Heart left ventricle (tissue), 16 donors: ENCODE measurements at regions of chr17 and their contacts with region 1.

Region 1: DNA sequence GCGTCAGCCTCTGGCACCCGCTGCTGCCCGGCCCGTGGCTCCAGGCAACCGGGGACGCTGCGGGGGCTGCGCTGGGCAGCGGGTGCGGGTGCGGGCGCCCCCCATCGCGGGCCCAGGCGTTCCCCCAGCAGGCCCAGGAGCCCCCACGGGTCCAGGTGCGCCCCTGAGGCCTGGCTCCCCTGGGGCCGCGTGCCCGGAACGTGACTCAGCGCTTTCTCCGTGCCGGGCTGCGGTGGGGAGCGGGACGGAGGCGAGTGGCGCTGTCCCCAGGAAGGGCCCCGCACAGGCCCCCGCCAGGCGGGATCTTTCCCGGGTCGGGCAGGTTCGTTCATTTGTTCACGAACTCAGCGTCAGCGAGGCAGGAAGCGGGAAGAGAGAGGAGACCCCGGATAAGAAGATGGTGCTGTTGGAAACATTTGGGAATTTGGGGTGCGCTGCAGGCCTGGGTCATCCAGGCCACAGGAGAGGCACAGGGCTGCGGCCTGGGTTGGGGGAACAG is 18.4 kb upstream of the EXOC7 start:
- DNase-seq: peak in 1 of 5 donors; percentile 47
- ATAC-seq: peak in 3 of 4 donors; percentile 30 to 60 (median 35)
- H3K4me3 ChIP-seq: peak overlapping the region in 11 of 12 donors; percentile 12 to 62 (median 42)
- H3K27ac ChIP-seq: peak overlapping the region in 3 of 12 donors; percentile 4 to 34 (median 25)
- H3K4me1 ChIP-seq: peaks cover 0 to 15% (median 2%) of the 10 kb centered on the region in 12 donors
- H3K27me3 ChIP-seq: no peaks in the 10 kb centered on the region
- CTCF ChIP-seq: no peak
- POLR2A ChIP-seq: no peak

Region 2: DNA sequence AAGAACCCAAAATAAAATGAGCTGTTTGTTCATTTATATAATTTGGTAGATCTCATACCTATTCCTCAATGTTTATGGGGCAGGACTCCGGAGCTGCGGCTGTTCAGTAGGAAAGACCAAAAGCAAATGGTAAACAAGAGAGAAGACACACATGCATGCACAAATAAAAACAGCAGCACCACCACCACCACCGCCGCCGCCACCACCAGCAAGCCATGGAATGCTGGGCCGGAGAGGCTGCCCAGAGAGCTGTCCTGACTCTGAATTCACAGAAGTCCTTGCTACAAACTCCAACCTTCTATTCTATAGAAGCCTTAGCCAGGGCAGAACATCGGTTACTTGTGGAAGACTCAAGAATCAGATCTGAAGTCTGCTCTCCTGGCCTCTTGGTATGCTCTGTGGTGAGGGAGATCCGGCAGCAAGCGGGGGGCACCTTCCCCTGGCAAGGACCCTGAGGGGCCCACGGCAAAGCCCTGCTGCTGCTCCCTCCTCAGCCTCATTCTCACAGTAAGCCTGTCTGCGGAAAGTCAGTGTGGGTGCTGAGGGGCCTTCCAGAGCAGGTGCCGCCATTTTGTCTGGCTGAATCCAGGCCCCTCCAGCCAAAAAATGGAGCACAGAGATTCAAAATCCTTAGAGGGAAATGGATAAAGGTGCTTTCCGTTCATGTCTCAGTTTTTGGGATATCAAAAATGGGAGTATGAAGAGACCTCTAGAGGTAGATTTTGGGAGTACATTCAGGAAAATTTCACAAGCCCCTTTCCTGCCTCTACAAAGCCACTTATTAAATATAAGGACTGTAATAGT is 25.4 kb after region 1 on chr17:
- intact Hi-C with region 1: loop called in 1 of 10 experiments (anchors 1 kb)
- DNase-seq: peak in 1 of 5 donors; percentile 15
- ATAC-seq: no peak
- H3K4me3 ChIP-seq: no peak overlapping the region
- H3K27ac ChIP-seq: no peak overlapping the region
- H3K4me1 ChIP-seq: peaks cover 0 to 37% (median 11%) of the 10 kb centered on the region in 12 donors
- H3K27me3 ChIP-seq: no peaks in the 10 kb centered on the region
- CTCF ChIP-seq: peak; percentile 31 to 65 (median 51)
- POLR2A ChIP-seq: no peak

Region 3: DNA sequence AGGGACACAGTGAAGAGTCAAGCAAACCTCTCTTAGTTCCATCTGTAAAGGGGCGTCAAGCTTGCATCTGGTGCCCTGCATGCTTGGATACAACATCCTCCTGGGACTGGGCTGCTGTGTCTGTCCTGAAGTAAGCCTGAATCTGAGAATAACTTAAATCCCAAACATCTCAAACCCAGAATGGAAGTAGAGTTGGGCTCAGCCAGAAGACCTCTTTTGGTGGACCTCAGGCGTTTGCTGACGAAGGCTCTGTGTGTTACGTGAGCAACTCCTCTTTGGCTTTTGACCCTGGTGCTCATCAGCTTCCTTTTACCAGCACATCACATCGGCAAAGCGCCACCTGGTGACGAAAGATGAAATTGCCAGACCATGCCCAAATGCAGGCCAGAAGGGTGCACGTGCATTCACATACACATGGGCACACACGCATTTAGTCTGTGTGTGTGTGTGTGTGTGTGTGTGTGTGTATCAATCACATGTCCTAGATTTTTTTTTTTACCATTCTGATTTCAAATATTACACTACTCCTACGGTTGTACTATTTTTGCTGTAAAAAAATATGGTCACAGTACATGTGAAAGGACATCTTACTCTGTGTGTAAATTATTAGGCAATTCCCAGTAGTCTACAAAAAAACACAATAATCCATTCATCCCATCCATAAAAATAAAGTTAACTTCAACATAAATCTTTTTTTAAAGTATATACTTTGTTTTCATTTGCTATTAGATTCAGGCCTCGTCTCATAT is 60.2 kb after region 1 on chr17:
- intact Hi-C with region 1: loop called (anchors 1 to 5 kb)
- DNase-seq: peak; percentile 82 to 87 (median 84)
- ATAC-seq: peak in 3 of 4 donors; percentile 83 to 94 (median 89)
- H3K4me3 ChIP-seq: no peak overlapping the region
- H3K27ac ChIP-seq: no peak overlapping the region
- H3K4me1 ChIP-seq: peaks cover 0 to 13% (median 4%) of the 10 kb centered on the region in 12 donors
- H3K27me3 ChIP-seq: no peaks in the 10 kb centered on the region
- CTCF ChIP-seq: peak; percentile 78 to 92 (median 88)
- POLR2A ChIP-seq: no peak

Region 4: GRCh38 chr17:76278952-76279741 is 157.2 kb after region 1 on chr17:
- intact Hi-C with region 1: loop called (anchors 1 to 5 kb)
- DNase-seq: peak; percentile 81 to 94 (median 85)
- ATAC-seq: peak; percentile 81 to 93 (median 87)
- H3K4me3 ChIP-seq: peak overlapping the region in 1 of 12 donors; percentile 2
- H3K27ac ChIP-seq: no peak overlapping the region
- H3K4me1 ChIP-seq: peaks cover 0 to 20% (median 5%) of the 10 kb centered on the region in 12 donors
- H3K27me3 ChIP-seq: no peaks in the 10 kb centered on the region
- CTCF ChIP-seq: peak; percentile 95 to 100 (median 99)
- POLR2A ChIP-seq: no peak

Region 5: GRCh38 chr17:76296186-76296585 is 174.2 kb after region 1 on chr17:
- intact Hi-C with region 1: loop called in 5 of 10 experiments (anchors 5 kb)
- DNase-seq: no peak
- ATAC-seq: peak; percentile 15 to 63 (median 49)
- H3K4me3 ChIP-seq: no peak overlapping the region
- H3K27ac ChIP-seq: no peak overlapping the region
- H3K4me1 ChIP-seq: peaks cover 0 to 15% (median 5%) of the 10 kb centered on the region in 12 donors
- H3K27me3 ChIP-seq: no peaks in the 10 kb centered on the region
- CTCF ChIP-seq: no peak
- POLR2A ChIP-seq: no peak

Region 6: GRCh38 chr17:76397687-76398487 is 275.9 kb after region 1 on chr17:
- intact Hi-C with region 1: loop called in 1 of 10 experiments (anchors 5 kb)
- DNase-seq: peak; percentile 85 to 94 (median 90)
- ATAC-seq: peak; percentile 38 to 86 (median 82)
- H3K4me3 ChIP-seq: no peak overlapping the region
- H3K27ac ChIP-seq: no peak overlapping the region
- H3K4me1 ChIP-seq: peaks cover 0 to 19% (median 5%) of the 10 kb centered on the region in 12 donors
- H3K27me3 ChIP-seq: no peaks in the 10 kb centered on the region
- CTCF ChIP-seq: peak; percentile 92 to 99 (median 98)
- POLR2A ChIP-seq: no peak